Motor neuron (in vitro differentiated cells): ENCODE measurements at regions of chr22 and their contacts with region 1.

Region 1: GRCh38 chr22:46563381-46564083 is 26.1 kb upstream of the CELSR1 start:
- ATAC-seq: peak; percentile 76 to 92 (median 86)
- H3K4me3 ChIP-seq: no peak overlapping the region
- H3K27ac ChIP-seq: peak overlapping the region; percentile 44 to 82
- H3K4me1 ChIP-seq: peaks cover 18 to 29% of the 10 kb centered on the region in 2 donors

Region 2: GRCh38 chr22:46462726-46463371 is 100.7 kb before region 1 on chr22:
- in situ Hi-C with region 1: no loop called
- ATAC-seq: peak in 5 of 8 experiments; percentile 55 to 81 (median 77)
- H3K4me3 ChIP-seq: no peak overlapping the region
- H3K27ac ChIP-seq: no peak overlapping the region
- H3K4me1 ChIP-seq: peaks cover 15 to 47% of the 10 kb centered on the region in 2 donors

Region 3: DNA sequence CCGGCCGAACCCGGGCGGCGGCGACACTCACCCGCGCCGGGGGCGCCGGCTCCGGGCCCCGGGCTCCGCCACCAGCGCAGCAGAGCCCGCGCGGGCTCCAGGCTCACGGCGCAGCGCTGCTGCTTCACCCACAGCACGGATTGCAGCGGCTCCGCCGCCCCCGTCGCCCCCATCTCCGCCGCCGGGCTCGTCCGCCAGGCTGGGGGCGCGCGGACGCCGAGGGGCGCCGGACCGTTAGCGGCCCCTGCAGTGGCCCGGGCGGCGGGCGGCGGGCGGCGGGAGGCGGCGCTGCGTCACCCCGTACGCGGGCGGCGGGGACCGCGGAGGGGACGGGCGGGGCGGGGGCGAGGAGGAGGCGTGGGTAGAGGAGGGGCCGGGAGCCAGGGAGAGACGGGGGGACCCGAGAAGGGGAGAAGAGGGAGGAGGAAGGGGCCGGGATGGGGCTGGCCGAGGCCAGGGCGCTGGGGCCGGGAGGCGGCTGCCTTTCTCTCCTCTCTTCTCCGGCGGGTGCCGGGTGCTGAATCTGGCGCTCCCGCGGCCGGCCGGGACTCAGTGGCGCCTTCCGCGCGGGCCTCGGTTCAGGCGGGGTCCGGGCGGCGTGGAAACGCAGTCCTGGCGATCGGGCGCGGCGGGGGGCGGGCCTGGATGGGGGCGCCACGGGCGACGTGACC is 174.6 kb after region 1 on chr22 and contains the start of gene CERK:
- in situ Hi-C with region 1: loop called in 1 of 9 experiments (anchors 25 kb)
- ATAC-seq: peak; percentile 50 to 74 (median 64)
- H3K4me3 ChIP-seq: peak within 1 kb of the TSS; percentile 85 to 100 (median 92)
- H3K27ac ChIP-seq: peak within 1 kb of the TSS; percentile 88 to 95
- H3K4me1 ChIP-seq: peaks cover 27 to 29% of the 10 kb centered on the region in 2 donors
- total RNA-seq, gene CERK: 15.7 to 136 (median 58.0) TPM